ENCODE measurements at regions of chr5 and their contacts with region 1.

Region 1: GRCh38 chr5:32174011-32174870 is at the start of gene GOLPH3:
- DNase-seq: peak; percentile 95
- H3K4me3 ChIP-seq: peak within 1 kb of the TSS; percentile 79 to 97 (median 90)
- H3K27ac ChIP-seq: peak within 1 kb of the TSS; percentile 99 to 100 (median 100)
- H3K4me1 ChIP-seq: peaks cover 6 to 39% (median 31%) of the 10 kb centered on the region in 4 donors
- H3K27me3 ChIP-seq: no peaks in the 10 kb centered on the region
- CTCF ChIP-seq: peak in 3 of 5 experiments; percentile 8 to 31 (median 26)
- EP300 ChIP-seq: no peak
- POLR2A ChIP-seq: peak; percentile 95
- total RNA-seq, gene GOLPH3: 52.1 to 666 (median 132) TPM

Region 2: GRCh38 chr5:32312647-32313523 is 138.6 kb after region 1 on chr5 and contains the start of gene MTMR12:
- in situ Hi-C with region 1: no loop called
- intact Hi-C with region 1: loop called (anchors 2 kb)
- DNase-seq: peak; percentile 100
- H3K4me3 ChIP-seq: peak within 1 kb of the TSS; percentile 53 to 94 (median 84)
- H3K27ac ChIP-seq: peak within 1 kb of the TSS; percentile 99
- H3K4me1 ChIP-seq: peaks cover 12 to 45% (median 28%) of the 10 kb centered on the region in 4 donors
- H3K27me3 ChIP-seq: no peaks in the 10 kb centered on the region
- CTCF ChIP-seq: no peak
- EP300 ChIP-seq: no peak
- POLR2A ChIP-seq: peak; percentile 80
- total RNA-seq, gene MTMR12: 10.1 to 27.9 (median 16.1) TPM

Measured in transverse colon (tissue), 4 donors.